ENCODE measurements at regions of chr16 and their contacts with region 1.

Region 1: GRCh38 chr16:87895641-87896141 is 26.4 kb upstream of the SLC7A5 start:
- DNase-seq: peak; percentile 96
- H3K4me3 Mint-ChIP-seq: peak overlapping the region; percentile 38
- H3K27ac Mint-ChIP-seq: peak overlapping the region; percentile 98
- H3K4me1 Mint-ChIP-seq: peaks cover 54% of the 10 kb centered on the region
- H3K27me3 Mint-ChIP-seq: no peaks in the 10 kb centered on the region

Region 2: DNA sequence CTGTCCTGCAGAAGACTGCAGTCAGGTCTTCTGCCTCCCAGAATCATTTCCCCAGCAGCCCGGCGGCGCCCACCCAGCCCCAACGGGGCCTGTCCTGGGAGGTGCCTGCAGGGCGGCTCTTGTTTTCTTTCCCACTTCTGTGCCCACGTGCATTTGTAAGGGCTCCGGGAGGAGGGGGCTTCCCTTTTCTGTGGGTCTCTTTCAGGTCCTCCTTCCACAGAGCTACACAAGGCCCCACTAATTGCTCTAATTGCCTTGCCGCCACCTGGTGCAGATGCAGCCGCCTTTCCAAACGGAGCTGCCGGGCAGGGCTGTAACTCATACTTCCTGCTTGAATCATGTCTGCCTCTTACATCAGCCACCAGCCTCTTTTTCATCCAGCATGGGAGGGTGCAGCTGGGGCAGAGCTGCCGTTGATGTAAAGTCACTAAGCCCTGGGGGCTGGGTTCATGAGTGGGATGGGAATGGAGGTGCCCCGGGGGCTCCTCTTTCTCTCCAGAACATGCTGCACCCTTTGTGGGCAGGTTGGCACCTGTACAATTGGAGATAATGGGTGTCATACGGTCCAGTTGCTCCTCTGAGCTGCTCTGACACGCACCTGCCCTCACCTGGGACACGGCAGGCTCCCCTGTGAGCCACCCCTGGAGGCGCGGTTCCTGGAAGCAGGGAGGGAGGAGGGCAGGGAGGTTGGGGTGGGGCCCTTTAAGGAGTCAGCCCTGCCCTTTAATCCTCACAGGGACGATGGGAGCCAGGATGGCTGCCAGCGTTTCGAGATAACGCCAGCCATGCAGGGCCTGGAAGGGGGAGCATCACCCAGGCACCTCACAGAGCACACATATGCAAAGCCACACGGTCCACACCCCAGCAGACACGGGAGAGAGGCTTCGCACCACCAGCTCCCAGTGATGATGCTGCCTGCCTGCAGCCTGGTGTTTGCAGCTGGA is 88.8 kb before region 1 on chr16:
- CTCF ChIA-PET with region 1: interaction called, 3 read pairs
- intact Hi-C with region 1: loop called (anchors 2 kb)
- DNase-seq: peak; percentile 88
- H3K4me3 Mint-ChIP-seq: peak overlapping the region; percentile 89
- H3K27ac Mint-ChIP-seq: peak overlapping the region; percentile 94
- H3K4me1 Mint-ChIP-seq: peaks cover 31% of the 10 kb centered on the region
- H3K27me3 Mint-ChIP-seq: no peaks in the 10 kb centered on the region

Region 3: GRCh38 chr16:87877938-87878507 is 17.7 kb before region 1 on chr16:
- CTCF ChIA-PET with region 1: interaction called, 33 read pairs
- intact Hi-C with region 1: loop called (anchors 1 kb)
- DNase-seq: peak; percentile 71
- H3K4me3 Mint-ChIP-seq: no peak overlapping the region
- H3K27ac Mint-ChIP-seq: no peak overlapping the region
- H3K4me1 Mint-ChIP-seq: peaks cover 47% of the 10 kb centered on the region
- H3K27me3 Mint-ChIP-seq: peaks cover 5% of the 10 kb centered on the region

Region 4: DNA sequence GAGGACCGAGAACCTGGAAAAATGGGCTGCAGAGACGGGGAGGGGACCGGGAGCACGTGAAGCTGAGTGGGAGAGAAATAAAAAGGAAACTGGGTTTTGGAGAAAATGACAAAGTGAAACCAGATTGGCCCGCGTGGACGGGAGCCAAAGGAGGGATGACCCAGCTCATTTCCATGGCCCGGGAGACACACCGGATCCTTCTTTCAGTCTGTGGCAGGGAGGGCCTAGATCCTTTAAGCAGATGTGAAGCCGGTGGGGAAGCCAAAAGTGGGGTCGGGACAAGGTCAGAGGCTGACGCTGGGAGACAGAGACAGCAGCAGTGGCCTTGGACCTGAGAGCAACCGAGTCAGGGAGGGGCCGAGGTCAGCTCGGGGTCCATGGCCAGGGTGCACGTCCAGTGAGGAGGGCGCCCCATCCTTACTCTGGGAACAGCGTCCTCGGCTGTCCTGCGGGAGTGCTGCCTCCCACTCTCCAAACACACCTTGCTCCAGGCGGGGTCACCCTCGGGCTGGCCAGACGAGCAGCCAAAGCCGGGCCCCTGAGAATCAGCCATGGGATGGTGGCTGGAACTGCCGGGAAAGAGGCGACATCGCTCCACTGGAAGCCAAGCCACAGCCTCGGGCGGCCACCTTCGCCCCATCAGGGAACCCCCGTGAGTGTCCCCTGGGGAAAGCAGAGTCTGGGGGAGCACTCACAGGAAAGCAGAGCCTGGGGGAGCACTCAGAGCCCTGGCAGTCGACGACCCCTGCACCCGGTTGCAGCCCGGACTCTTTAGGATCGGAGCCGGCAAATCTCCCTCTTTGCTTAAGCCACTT is 23.4 kb after region 1 on chr16:
- CTCF ChIA-PET with region 1: no interaction called
- intact Hi-C with region 1: no loop called
- DNase-seq: no peak
- H3K4me3 Mint-ChIP-seq: no peak overlapping the region
- H3K27ac Mint-ChIP-seq: no peak overlapping the region
- H3K4me1 Mint-ChIP-seq: peaks cover 3% of the 10 kb centered on the region
- H3K27me3 Mint-ChIP-seq: no peaks in the 10 kb centered on the region

Region 5: DNA sequence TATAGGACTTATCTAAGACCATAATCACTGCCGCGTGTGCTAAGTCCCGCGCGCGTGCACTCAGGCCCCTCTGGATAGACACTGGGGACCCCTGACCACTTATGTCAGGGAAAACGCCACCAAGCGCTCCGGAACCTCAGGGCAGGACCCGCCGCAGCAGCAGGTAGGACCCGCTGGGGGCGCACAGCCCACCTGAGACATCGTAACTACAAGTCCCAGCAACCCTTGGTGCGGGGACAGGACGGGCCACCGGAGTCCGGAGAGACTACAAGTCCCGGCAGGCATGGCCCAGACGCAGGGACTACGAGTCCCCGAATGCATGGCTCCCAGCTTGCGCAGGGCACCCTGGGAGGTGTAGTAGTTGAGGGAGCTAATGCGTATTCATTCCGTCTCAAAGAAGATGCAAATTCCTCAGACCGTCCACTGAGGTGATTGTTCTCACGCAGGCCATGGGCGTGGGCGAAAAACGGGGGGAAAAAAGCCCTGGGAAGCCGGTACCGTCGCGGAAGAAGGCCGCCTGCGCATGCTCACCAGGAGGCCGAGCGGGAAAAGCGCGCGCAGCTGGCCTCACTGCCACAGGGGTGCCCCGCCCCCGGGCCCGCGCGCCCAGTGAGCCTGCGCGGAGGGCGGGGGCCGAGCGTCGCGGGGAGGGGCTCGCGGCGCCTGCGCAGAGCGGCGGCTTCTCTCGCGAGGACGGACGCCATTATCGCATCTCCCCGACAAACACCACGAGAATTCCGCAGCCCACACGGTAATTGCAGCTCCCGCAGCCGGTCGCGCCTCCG is 55.3 kb after region 1 on chr16 and contains the start of gene BANP:
- CTCF ChIA-PET with region 1: interaction called, 3 read pairs
- intact Hi-C with region 1: loop called (anchors 2 kb)
- DNase-seq: peak; percentile 98
- H3K4me3 Mint-ChIP-seq: peak within 1 kb of the TSS; percentile 85
- H3K27ac Mint-ChIP-seq: peak within 1 kb of the TSS; percentile 99
- H3K4me1 Mint-ChIP-seq: peaks cover 41% of the 10 kb centered on the region
- H3K27me3 Mint-ChIP-seq: no peaks in the 10 kb centered on the region
- total RNA-seq, gene BANP: 35.1 to 38.6 TPM

Region 6: GRCh38 chr16:87963400-87963799 is 67.7 kb after region 1 on chr16:
- CTCF ChIA-PET with region 1: no interaction called
- intact Hi-C with region 1: loop called (anchors 1 kb)
- DNase-seq: peak; percentile 92
- H3K4me3 Mint-ChIP-seq: peak overlapping the region; percentile 29
- H3K27ac Mint-ChIP-seq: peak overlapping the region; percentile 86
- H3K4me1 Mint-ChIP-seq: peaks cover 80% of the 10 kb centered on the region
- H3K27me3 Mint-ChIP-seq: no peaks in the 10 kb centered on the region

Measured in activated naive CD4-positive, alpha-beta T cell treated with anti-CD3 and anti-CD28 coated beads for 36 hours (primary cell).